ENCODE measurements at regions of chr4 and their contacts with region 1.

Region 1: GRCh38 chr4:663438-664428 is 10.3 kb downstream of the ATP5ME start:
- DNase-seq: peak; percentile 81
- CTCF ChIP-seq: peak; percentile 16

Region 2: GRCh38 chr4:637536-638280 is 26.0 kb before region 1 on chr4:
- CTCF ChIA-PET with region 1: no interaction called
- POLR2A ChIA-PET with region 1: no interaction called
- DNase-seq: no peak
- CTCF ChIP-seq: no peak

Region 3: GRCh38 chr4:674172-675035 is 10.7 kb after region 1 on chr4 and contains the starts of genes ATP5ME and MYL5:
- CTCF ChIA-PET with region 1: interaction called, 22 read pairs
- POLR2A ChIA-PET with region 1: no interaction called
- DNase-seq: peak; percentile 100
- CTCF ChIP-seq: peak; percentile 90

Region 4: GRCh38 chr4:700587-701264 is 37.0 kb after region 1 on chr4:
- CTCF ChIA-PET with region 1: no interaction called
- POLR2A ChIA-PET with region 1: no interaction called
- DNase-seq: no peak
- CTCF ChIP-seq: no peak

Region 5: DNA sequence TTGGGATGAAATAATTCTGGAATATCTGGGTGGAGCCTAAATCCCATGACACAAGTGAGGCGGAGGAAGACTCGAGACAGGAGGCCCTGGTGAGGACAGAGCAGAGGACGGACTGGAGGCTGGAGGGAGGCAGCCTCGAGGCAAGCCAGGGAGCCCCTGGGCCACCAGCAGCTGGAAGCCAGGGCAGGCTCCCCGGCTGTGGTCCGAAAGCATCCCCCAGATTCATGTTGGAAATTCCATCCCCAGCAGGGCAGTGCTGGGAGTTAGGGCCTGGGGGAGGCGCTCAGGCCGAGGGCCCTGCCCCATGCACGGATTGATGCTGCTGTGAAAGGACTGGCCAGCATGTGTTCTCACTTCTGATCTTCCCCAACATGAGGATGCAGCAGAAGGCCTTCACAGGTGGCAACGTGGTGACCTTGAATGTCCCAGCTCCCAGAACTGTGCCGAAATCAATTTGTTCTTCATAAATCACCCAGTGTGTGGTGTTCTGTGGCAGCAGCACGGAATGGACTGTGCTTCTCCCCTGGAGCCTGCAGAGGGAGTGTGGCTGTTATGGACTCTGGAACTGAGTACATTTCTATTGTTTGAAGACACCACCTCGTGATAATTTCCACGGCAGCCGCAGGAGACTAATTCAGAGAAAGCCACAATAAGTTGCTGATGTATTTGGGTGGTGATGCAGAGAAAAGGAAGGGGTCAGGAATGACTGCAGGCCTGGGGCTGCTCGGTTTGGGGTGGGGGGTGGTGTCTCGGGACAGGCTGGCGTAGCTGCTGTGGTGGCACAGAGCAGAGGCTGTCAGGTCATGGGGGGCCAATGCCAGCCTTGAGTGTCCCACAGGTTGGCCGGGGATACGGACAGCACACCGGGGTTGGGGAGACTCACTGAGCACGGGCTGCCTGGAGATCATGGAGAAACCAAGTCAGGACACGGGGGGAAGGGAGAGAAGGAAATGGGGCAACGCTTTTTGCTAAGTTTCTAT is 98.8 kb after region 1 on chr4:
- CTCF ChIA-PET with region 1: no interaction called
- POLR2A ChIA-PET with region 1: no interaction called
- DNase-seq: no peak
- CTCF ChIP-seq: no peak